Naive thymus-derived CD8-positive, alpha-beta T cell (primary cell): ENCODE measurements at regions of chr17 and their contacts with region 1.

Region 1: GRCh38 chr17:77476931-77477877 is 336.4 kb downstream of the SEC14L1 start:
- DNase-seq: no peak
- ATAC-seq: no peak
- H3K4me3 Mint-ChIP-seq: peak overlapping the region; percentile 31 to 81 (median 73)
- H3K27ac Mint-ChIP-seq: peak overlapping the region; percentile 87 to 98 (median 94)
- H3K4me1 Mint-ChIP-seq: peaks cover 57 to 87% (median 85%) of the 10 kb centered on the region in 4 donors
- H3K27me3 Mint-ChIP-seq: no peaks in the 10 kb centered on the region

Region 2: GRCh38 chr17:77429919-77430752 is 47.1 kb before region 1 on chr17:
- POLR2A ChIA-PET with region 1: interaction called, 304 read pairs
- DNase-seq: peak; percentile 71 to 92 (median 82)
- ATAC-seq: peak; percentile 18 to 37
- H3K4me3 Mint-ChIP-seq: peak overlapping the region in 9 of 10 donors; percentile 16 to 99 (median 86)
- H3K27ac Mint-ChIP-seq: peak overlapping the region; percentile 80 to 100 (median 97)
- H3K4me1 Mint-ChIP-seq: peaks cover 45 to 94% (median 87%) of the 10 kb centered on the region in 4 donors
- H3K27me3 Mint-ChIP-seq: no peaks in the 10 kb centered on the region

Region 3: GRCh38 chr17:77437017-77437416 is 40.2 kb before region 1 on chr17:
- POLR2A ChIA-PET with region 1: interaction called, 304 read pairs
- DNase-seq: peak in 1 of 10 donors; percentile 75
- ATAC-seq: no peak
- H3K4me3 Mint-ChIP-seq: peak overlapping the region; percentile 95 to 99 (median 96)
- H3K27ac Mint-ChIP-seq: peak overlapping the region; percentile 93 to 100 (median 99)
- H3K4me1 Mint-ChIP-seq: peaks cover 39 to 97% (median 88%) of the 10 kb centered on the region in 4 donors
- H3K27me3 Mint-ChIP-seq: no peaks in the 10 kb centered on the region

Region 4: GRCh38 chr17:77444984-77445759 is 32.0 kb before region 1 on chr17:
- POLR2A ChIA-PET with region 1: interaction called, 304 read pairs
- DNase-seq: peak; percentile 67 to 98 (median 88)
- ATAC-seq: peak; percentile 60 to 77
- H3K4me3 Mint-ChIP-seq: peak overlapping the region; percentile 72 to 99 (median 86)
- H3K27ac Mint-ChIP-seq: peak overlapping the region; percentile 93 to 100 (median 99)
- H3K4me1 Mint-ChIP-seq: peaks cover 59 to 98% (median 96%) of the 10 kb centered on the region in 4 donors
- H3K27me3 Mint-ChIP-seq: peaks cover 0 to 4% (median 0%) of the 10 kb centered on the region in 5 donors

Region 5: GRCh38 chr17:77451245-77451893 is 25.8 kb before region 1 on chr17:
- POLR2A ChIA-PET with region 1: interaction called, 140 read pairs
- DNase-seq: peak in 9 of 10 donors; percentile 60 to 81 (median 68)
- ATAC-seq: peak; percentile 50 to 62
- H3K4me3 Mint-ChIP-seq: peak overlapping the region; percentile 91 to 98 (median 96)
- H3K27ac Mint-ChIP-seq: peak overlapping the region; percentile 92 to 99 (median 99)
- H3K4me1 Mint-ChIP-seq: peaks cover 28 to 67% (median 54%) of the 10 kb centered on the region in 4 donors
- H3K27me3 Mint-ChIP-seq: no peaks in the 10 kb centered on the region

Region 6: GRCh38 chr17:77465358-77466041 is 11.7 kb before region 1 on chr17:
- POLR2A ChIA-PET with region 1: interaction called, 140 read pairs
- DNase-seq: peak in 9 of 10 donors; percentile 70 to 92 (median 80)
- ATAC-seq: peak; percentile 82 to 95
- H3K4me3 Mint-ChIP-seq: peak overlapping the region; percentile 70 to 88 (median 81)
- H3K27ac Mint-ChIP-seq: peak overlapping the region; percentile 75 to 99 (median 94)
- H3K4me1 Mint-ChIP-seq: peaks cover 48 to 94% (median 92%) of the 10 kb centered on the region in 4 donors
- H3K27me3 Mint-ChIP-seq: no peaks in the 10 kb centered on the region

Region 7: GRCh38 chr17:77516902-77517301 is 39.7 kb after region 1 on chr17:
- POLR2A ChIA-PET with region 1: no interaction called
- DNase-seq: no peak
- ATAC-seq: no peak
- H3K4me3 Mint-ChIP-seq: no peak overlapping the region
- H3K27ac Mint-ChIP-seq: no peak overlapping the region
- H3K4me1 Mint-ChIP-seq: no peaks in the 10 kb centered on the region
- H3K27me3 Mint-ChIP-seq: no peaks in the 10 kb centered on the region

Region 8: GRCh38 chr17:77609553-77610517 is 132.6 kb after region 1 on chr17:
- POLR2A ChIA-PET with region 1: no interaction called
- DNase-seq: peak; percentile 44 to 89 (median 74)
- ATAC-seq: peak; percentile 98 to 99
- H3K4me3 Mint-ChIP-seq: peak overlapping the region; percentile 61 to 89 (median 82)
- H3K27ac Mint-ChIP-seq: peak overlapping the region; percentile 91 to 99 (median 96)
- H3K4me1 Mint-ChIP-seq: peaks cover 27 to 38% (median 34%) of the 10 kb centered on the region in 4 donors
- H3K27me3 Mint-ChIP-seq: no peaks in the 10 kb centered on the region